ENCODE measurements at regions of chr2 and their contacts with region 1.

Region 1: GRCh38 chr2:181178823-181179412 is 198.5 kb downstream of the UBE2E3 start:
- DNase-seq: peak; percentile 83
- ATAC-seq: peak; percentile 68
- H3K4me3 Mint-ChIP-seq: peak overlapping the region; percentile 41
- H3K27ac Mint-ChIP-seq: peak overlapping the region; percentile 82
- H3K4me1 Mint-ChIP-seq: peaks cover 65% of the 10 kb centered on the region
- H3K27me3 Mint-ChIP-seq: no peaks in the 10 kb centered on the region

Region 2: DNA sequence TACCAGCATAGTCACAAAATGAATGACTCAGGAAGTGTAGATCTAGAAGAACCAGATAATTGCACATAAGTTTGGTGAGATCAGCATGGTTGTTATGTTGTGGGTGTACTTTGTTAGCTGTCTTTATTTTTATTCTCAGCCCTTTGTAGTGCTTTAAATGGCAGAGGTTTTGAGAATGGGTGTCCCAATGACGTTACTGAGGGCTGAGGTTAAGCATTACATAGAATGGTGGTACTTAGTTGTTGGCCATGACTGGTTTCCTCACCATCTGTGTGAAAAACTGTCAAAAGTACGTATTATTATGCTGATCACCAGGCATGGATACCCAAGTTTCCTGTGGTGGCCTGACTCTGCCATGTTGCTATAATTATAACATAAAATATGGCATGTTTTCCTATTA is 32.7 kb before region 1 on chr2:
- CTCF ChIA-PET with region 1: interaction called, 10 read pairs
- DNase-seq: peak; percentile 65
- ATAC-seq: peak; percentile 59
- H3K4me3 Mint-ChIP-seq: peak overlapping the region; percentile 18
- H3K27ac Mint-ChIP-seq: peak overlapping the region; percentile 86
- H3K4me1 Mint-ChIP-seq: peaks cover 68% of the 10 kb centered on the region
- H3K27me3 Mint-ChIP-seq: no peaks in the 10 kb centered on the region

Region 3: DNA sequence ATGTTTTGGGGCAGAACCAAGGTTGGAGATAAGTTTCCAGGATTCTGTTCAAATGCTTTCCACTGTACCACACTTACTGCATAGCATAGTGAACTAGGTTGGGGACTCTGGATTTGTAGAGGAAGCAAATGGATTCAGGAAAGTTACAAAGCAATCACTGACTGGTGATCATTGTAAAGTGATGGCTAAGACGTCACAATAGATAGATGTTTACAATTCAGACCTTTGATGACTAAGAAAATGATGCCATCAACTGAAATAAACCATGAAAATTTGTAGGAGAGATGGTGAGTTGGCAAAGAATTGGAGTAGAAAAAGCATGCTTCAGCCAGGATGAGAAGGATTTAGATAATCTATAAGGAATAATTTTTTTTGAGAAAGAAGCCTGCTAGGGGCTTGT is 20.5 kb before region 1 on chr2:
- CTCF ChIA-PET with region 1: no interaction called
- DNase-seq: no peak
- ATAC-seq: no peak
- H3K4me3 Mint-ChIP-seq: no peak overlapping the region
- H3K27ac Mint-ChIP-seq: no peak overlapping the region
- H3K4me1 Mint-ChIP-seq: peaks cover 21% of the 10 kb centered on the region
- H3K27me3 Mint-ChIP-seq: no peaks in the 10 kb centered on the region

Region 4: DNA sequence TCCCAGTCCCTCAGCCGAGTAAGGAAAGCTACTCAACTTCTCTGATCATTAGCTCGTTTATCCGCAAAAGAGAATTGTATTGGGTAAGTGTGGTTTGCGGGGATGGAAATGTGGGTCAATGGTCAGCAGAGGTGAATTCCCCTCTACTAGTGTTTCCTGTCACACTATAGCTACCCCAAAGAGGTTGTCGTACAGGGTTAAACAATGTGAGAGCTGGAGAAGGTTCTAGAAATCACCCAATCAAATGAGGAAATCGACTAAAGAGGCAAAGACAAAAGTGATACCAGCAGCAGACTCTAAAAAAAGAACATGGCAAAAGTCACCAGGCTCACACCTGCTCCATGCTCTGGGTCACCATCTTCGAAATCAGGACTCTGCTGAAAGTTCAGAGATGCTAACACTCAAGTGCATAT is 133.6 kb after region 1 on chr2:
- CTCF ChIA-PET with region 1: interaction called, 14 read pairs
- DNase-seq: peak; percentile 90
- ATAC-seq: peak; percentile 74
- H3K4me3 Mint-ChIP-seq: peak overlapping the region; percentile 75
- H3K27ac Mint-ChIP-seq: peak overlapping the region; percentile 99
- H3K4me1 Mint-ChIP-seq: peaks cover 53% of the 10 kb centered on the region
- H3K27me3 Mint-ChIP-seq: no peaks in the 10 kb centered on the region

Measured in activated CD8-positive, alpha-beta memory T cell treated with anti-CD3 and anti-CD28 coated beads, Interleukin-2, amount 10 ng/mL, durations not matched to agents 7 days and 5 days (primary cell).